ENCODE measurements at regions of chr10 and their contacts with region 1.

Region 1: DNA sequence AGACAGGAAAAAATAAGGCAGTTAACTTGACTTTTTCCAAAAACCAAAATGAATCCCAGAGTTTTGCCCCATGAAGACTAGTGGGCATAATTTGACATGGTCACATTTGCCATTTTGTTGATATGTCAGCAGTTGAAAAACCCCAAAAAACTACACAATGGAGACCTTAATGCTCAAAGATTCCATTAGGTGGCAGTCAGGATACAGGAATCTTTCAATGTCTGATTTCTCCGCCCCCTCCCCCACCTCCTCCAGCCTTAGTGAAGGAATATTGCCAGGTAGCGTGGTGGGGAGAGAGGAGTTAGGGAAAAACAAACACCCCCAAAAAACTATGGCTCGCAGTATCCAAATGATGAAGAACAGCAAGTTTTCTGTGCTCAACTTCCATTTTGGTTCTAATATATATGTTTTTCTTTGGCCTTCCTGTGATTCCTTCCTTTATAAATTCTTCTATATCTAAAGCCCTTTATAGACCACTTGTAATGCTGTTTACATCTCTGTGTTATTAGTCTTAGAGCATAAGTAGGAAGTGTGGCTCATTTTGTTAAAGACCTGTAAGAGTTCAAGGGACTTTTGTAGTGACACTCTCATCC is 6.7 kb upstream of the SMNDC1 start:
- DNase-seq: peak; percentile 77

Region 2: GRCh38 chr10:110035070-110035921 is 276.2 kb before region 1 on chr10:
- in situ Hi-C with region 1: no loop called
- DNase-seq: no peak

Region 3: GRCh38 chr10:110547139-110547761 is 235.8 kb after region 1 on chr10:
- in situ Hi-C with region 1: loop called (anchors 10 kb)
- DNase-seq: peak; percentile 76